ENCODE measurements at regions of chr18 and their contacts with region 1.

Region 1: DNA sequence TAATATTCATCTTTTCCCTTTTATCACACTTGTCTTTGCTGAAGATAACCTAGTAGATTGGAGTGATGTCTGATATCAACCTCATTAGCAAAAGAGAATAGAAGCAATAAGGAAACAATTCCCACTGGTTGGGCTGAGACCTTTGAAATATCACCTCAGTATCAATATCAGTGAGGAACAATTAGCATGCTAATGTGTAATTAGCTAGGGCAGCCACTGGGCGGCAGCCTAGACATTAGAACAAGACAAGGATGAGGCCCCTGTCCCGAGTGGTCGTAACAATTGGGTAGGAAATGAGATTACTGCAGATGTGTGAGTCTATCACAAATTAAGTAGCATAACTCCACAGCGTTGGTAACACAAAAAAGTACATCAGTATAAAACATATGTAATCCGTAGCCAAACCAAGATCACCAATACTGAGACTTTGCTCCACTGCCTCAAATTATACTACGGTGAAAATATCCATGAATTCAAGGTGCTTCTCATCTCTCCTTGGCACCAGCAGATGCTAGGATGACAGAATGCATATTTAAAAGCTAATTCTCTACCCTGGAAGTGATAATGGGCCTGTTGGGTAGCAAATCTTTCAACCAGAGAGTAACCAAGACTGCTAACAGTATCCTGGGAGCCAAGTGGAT is 99.1 kb downstream of the ALPK2 start:
- DNase-seq: peak; percentile 80
- H3K4me3 Mint-ChIP-seq: no peak overlapping the region
- H3K27ac Mint-ChIP-seq: no peak overlapping the region
- H3K4me1 Mint-ChIP-seq: peaks cover 12% of the 10 kb centered on the region
- H3K27me3 Mint-ChIP-seq: peaks cover 41% of the 10 kb centered on the region

Region 2: GRCh38 chr18:58754544-58755068 is 224.8 kb after region 1 on chr18:
- CTCF ChIA-PET with region 1: interaction called, 16 read pairs
- DNase-seq: no peak
- H3K4me3 Mint-ChIP-seq: no peak overlapping the region
- H3K27ac Mint-ChIP-seq: peak overlapping the region; percentile 63
- H3K4me1 Mint-ChIP-seq: peaks cover 46% of the 10 kb centered on the region
- H3K27me3 Mint-ChIP-seq: peaks cover 14% of the 10 kb centered on the region